Gastrocnemius medialis (tissue), 4 donors: ENCODE measurements at regions of chr9 and their contacts with region 1.

Region 1: GRCh38 chr9:121286973-121287741 is 19.2 kb downstream of the GSN start:
- DNase-seq: peak; percentile 74 to 84
- ATAC-seq: peak; percentile 68 to 70
- H3K4me3 ChIP-seq: peak overlapping the region; percentile 28 to 51 (median 45)
- H3K27ac ChIP-seq: peak overlapping the region; percentile 91 to 98 (median 94)
- H3K4me1 ChIP-seq: peaks cover 78 to 84% of the 10 kb centered on the region in 2 donors
- H3K27me3 ChIP-seq: no peaks in the 10 kb centered on the region
- CTCF ChIP-seq: no peak
- POLR2A ChIP-seq: no peak

Region 2: GRCh38 chr9:121267689-121268597 is 19.2 kb before region 1 on chr9 and contains the start of gene GSN:
- in situ Hi-C with region 1: no loop called
- intact Hi-C with region 1: loop called (anchors 2 kb)
- DNase-seq: peak; percentile 58 to 62
- ATAC-seq: peak; percentile 61 to 78
- H3K4me3 ChIP-seq: peak within 1 kb of the TSS; percentile 75 to 95 (median 84)
- H3K27ac ChIP-seq: peak within 1 kb of the TSS; percentile 67 to 81 (median 73)
- H3K4me1 ChIP-seq: peaks cover 38 to 53% of the 10 kb centered on the region in 2 donors
- H3K27me3 ChIP-seq: no peaks in the 10 kb centered on the region
- CTCF ChIP-seq: no peak
- POLR2A ChIP-seq: peak; percentile 78 to 80
- total RNA-seq, gene GSN: 487 to 785 (median 662) TPM

Region 3: GRCh38 chr9:121299467-121300234 is 12.5 kb after region 1 on chr9:
- in situ Hi-C with region 1: no loop called
- intact Hi-C with region 1: loop called (anchors 2 kb)
- DNase-seq: peak; percentile 60 to 75
- ATAC-seq: peak; percentile 4 to 16
- H3K4me3 ChIP-seq: peak overlapping the region; percentile 56 to 58 (median 56)
- H3K27ac ChIP-seq: peak overlapping the region; percentile 89 to 95 (median 91)
- H3K4me1 ChIP-seq: peaks cover 54 to 58% of the 10 kb centered on the region in 2 donors
- H3K27me3 ChIP-seq: no peaks in the 10 kb centered on the region
- CTCF ChIP-seq: peak in 1 of 5 experiments; percentile 8
- POLR2A ChIP-seq: peak; percentile 51 to 82

Region 4: GRCh38 chr9:121326130-121326838 is 39.1 kb after region 1 on chr9:
- in situ Hi-C with region 1: no loop called
- intact Hi-C with region 1: loop called (anchors 2 kb)
- DNase-seq: peak; percentile 74 to 91
- ATAC-seq: peak; percentile 89 to 90
- H3K4me3 ChIP-seq: peak overlapping the region in 2 of 4 donors; percentile 5 to 25
- H3K27ac ChIP-seq: peak overlapping the region; percentile 88 to 91 (median 88)
- H3K4me1 ChIP-seq: peaks cover 33% of the 10 kb centered on the region in 2 donors
- H3K27me3 ChIP-seq: no peaks in the 10 kb centered on the region
- CTCF ChIP-seq: no peak
- POLR2A ChIP-seq: peak; percentile 39 to 55

Region 5: DNA sequence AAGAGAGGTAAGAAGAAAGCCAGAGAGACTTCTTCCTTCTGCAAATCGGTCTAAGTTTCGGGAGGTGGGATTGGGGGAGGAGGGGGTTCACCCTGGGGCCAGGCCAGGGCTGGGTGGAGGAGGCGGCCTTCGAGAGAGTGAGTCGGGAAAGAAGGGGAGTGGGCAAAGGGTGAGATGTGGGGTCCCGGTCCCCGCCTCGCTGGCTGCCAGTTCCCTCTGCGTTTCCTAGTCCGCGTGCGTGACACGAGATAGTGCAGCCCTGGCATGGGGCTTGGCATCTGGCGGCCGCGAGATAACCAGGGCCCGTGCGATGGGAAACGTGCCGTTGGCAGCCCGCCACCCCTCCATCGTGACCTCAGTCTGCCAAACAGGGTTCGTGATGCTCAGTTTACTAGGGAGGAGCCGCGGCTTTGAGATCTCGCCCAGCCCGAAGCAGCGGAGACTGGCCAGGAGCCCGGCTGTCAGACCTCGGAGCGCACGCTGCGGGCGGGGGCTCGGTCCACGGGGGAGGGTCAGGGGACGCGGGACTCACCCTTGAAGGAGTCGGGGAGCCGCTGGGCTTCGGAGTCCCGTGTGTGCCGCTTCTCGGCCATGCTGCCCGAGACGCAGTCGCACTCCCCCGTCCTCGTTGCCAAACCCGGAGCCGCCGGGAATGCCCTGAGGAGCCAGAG is 82.6 kb after region 1 on chr9 and contains the start of gene STOM:
- in situ Hi-C with region 1: loop called in 1 of 4 experiments (anchors 10 kb)
- intact Hi-C with region 1: loop called (anchors 5 kb)
- DNase-seq: peak; percentile 89 to 92
- ATAC-seq: peak; percentile 68 to 72
- H3K4me3 ChIP-seq: peak within 1 kb of the TSS; percentile 60 to 85 (median 73)
- H3K27ac ChIP-seq: peak within 1 kb of the TSS; percentile 94 to 99 (median 96)
- H3K4me1 ChIP-seq: peaks cover 69 to 78% of the 10 kb centered on the region in 2 donors
- H3K27me3 ChIP-seq: no peaks in the 10 kb centered on the region
- CTCF ChIP-seq: peak in 1 of 5 experiments; percentile 27
- POLR2A ChIP-seq: peak; percentile 99 to 100
- total RNA-seq, gene STOM: 60.0 to 89.5 (median 76.3) TPM

Region 6: DNA sequence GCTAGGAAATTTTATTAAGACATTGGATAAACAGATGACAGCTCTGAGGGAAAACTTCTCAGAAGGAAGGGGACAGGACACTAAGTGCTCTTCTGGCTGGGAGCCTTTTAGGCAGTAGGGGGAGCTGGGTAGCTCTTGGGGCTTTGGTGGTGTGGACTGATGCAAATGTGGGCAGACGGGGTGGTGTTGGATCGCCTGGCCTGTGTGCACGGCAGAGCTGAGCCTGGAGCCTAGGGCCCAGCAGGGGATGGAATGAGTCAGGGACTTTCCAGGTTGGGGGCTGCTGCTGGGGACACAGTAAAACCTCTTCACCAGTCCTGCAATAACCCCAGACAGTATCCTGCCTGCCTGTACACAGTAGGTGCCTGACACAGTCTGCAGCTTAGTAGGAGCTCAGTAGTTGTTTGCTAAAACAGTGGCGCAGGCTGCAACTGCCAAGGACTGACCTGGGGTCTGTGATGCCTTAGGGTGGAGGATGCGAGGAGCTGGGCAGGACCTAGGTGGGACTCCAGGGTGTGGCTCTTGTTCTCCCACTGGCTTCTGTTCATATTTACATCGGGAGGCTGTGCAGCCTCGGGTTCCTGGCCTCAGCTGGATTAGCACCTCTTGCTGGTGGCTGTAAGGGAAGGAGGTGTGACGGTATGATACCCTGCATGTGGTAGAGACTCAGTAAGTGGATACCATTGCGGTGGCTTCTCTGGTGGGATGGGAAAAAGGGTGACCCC is 448.1 kb after region 1 on chr9:
- in situ Hi-C with region 1: no loop called
- intact Hi-C with region 1: loop called (anchors 5 kb)
- DNase-seq: no peak
- ATAC-seq: no peak
- H3K4me3 ChIP-seq: peak overlapping the region in 2 of 4 donors; percentile 44
- H3K27ac ChIP-seq: peak overlapping the region; percentile 91 to 98 (median 94)
- H3K4me1 ChIP-seq: peaks cover 80 to 95% of the 10 kb centered on the region in 2 donors
- H3K27me3 ChIP-seq: no peaks in the 10 kb centered on the region
- CTCF ChIP-seq: peak in 2 of 5 experiments; percentile 21 to 44
- POLR2A ChIP-seq: no peak